ENCODE measurements at regions of chr9 and their contacts with region 1.

Region 1: GRCh38 chr9:79877943-79878602 is 306.3 kb downstream of the TLE4 start:
- DNase-seq: no peak
- ATAC-seq: peak; percentile 82
- H3K4me3 Mint-ChIP-seq: peak overlapping the region; percentile 13
- H3K27ac Mint-ChIP-seq: peak overlapping the region; percentile 13
- H3K4me1 Mint-ChIP-seq: peaks cover 51% of the 10 kb centered on the region
- H3K27me3 Mint-ChIP-seq: no peaks in the 10 kb centered on the region
- CTCF ChIP-seq: no peak

Region 2: GRCh38 chr9:79858508-79858907 is 19.6 kb before region 1 on chr9:
- CTCF ChIA-PET with region 1: no interaction called
- POLR2A ChIA-PET with region 1: no interaction called
- intact Hi-C with region 1: loop called (anchors 2 kb)
- DNase-seq: no peak
- ATAC-seq: peak; percentile 92
- H3K4me3 Mint-ChIP-seq: peak overlapping the region; percentile 55
- H3K27ac Mint-ChIP-seq: peak overlapping the region; percentile 82
- H3K4me1 Mint-ChIP-seq: peaks cover 12% of the 10 kb centered on the region
- H3K27me3 Mint-ChIP-seq: no peaks in the 10 kb centered on the region
- CTCF ChIP-seq: no peak

Measured in activated B cell treated with CpG ODN at 0.5 μM for 24 hours (primary cell).